Activated CD8-positive, alpha-beta T cell treated with anti-CD3 and anti-CD28 coated beads for 36 hours (primary cell): ENCODE measurements at regions of chr11 and their contacts with region 1.

Region 1: DNA sequence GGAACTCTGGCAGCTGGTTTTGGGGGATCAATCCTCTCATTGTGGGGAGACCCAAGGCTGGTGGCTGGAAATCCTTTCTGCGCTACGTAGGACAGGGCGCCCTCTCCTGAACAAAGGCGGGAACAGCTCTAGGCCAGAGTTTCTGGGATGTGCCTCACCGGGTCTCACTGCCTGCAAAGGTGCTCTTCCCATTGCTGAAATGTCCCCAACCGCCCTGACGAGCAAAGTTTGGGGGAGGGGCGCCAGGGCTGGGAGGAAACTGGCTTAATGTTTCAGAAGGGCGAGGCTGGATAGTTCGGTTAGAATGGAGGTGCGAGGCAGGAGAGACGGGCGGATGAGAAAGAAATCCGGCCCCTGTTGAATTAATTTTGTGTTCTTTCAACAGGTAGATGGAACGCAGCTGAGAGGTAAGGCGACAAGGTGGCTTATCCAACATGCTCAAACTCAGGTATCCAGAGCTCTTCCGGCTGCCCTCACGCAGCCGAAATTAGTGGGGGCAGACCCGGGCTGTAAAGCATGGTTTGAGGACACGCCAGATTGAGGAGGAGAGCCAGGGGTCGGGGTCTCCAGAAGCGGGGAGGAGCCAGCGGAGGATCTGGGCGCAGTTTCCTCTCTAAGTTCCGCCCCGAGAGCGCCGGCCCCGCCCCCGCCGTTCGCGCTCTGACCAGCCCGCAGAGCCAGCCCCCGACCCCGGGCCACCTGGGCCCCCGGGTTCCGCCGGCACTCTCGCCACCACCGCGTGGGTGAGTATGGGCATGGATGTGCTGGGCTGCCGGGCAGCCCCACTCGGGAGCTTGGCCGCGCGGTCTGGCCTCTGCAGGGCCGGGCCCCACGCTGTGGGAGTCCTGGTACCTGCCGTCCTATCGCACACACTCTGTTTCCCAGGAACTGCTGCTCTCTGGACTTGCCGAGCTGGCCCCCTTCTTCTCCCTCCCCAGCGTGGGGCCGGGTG is at the start of gene PGAP2:
- DNase-seq: peak; percentile 70
- ATAC-seq: peak; percentile 80
- H3K4me3 Mint-ChIP-seq: peak within 1 kb of the TSS; percentile 95
- H3K27ac Mint-ChIP-seq: peak within 1 kb of the TSS; percentile 91
- H3K4me1 Mint-ChIP-seq: peaks cover 22% of the 10 kb centered on the region
- H3K27me3 Mint-ChIP-seq: no peaks in the 10 kb centered on the region
- CTCF ChIP-seq: peak; percentile 58
- total RNA-seq, gene PGAP2: 33.1 to 36.7 TPM

Region 2: DNA sequence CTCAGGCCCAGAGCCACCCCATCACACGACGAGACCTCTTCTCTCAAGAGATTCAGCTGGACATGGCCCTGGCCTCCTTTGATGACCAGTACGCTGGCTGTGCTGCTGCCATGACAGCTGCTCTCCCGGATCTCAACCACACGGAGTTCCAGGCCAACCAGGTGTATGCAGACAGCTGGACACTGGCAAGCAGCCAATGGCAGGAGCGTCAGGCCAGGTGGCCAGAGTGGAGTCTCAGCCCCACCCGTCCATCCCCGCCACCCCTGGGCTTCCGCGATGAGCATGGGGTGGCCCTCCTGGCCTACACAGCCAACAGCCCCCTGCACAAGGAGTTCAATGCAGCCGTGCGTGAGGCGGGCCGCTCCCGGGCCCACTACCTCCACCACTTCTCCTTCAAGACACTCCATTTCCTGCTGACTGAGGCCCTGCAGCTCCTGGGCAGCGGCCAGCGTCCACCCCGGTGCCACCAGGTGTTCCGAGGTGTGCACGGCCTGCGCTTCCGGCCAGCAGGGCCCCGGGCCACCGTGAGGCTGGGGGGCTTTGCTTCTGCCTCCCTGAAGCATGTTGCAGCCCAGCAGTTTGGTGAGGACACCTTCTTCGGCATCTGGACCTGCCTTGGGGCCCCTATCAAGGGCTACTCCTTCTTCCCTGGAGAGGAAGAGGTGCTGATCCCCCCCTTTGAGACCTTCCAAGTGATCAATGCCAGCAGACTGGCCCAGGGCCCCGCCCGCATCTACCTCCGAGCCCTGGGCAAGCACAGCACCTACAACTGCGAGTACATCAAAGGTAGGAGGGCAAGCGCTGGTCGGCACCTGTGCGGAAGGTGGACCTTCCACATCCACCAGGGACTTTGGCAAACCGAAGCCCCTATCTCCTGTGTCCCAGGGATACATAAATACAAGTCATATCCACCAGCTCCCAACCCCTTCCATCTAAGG is 148.3 kb before region 1 on chr11:
- CTCF ChIA-PET with region 1: no interaction called
- POLR2A ChIA-PET with region 1: no interaction called
- intact Hi-C with region 1: no loop called
- DNase-seq: no peak
- ATAC-seq: no peak
- H3K4me3 Mint-ChIP-seq: no peak overlapping the region
- H3K27ac Mint-ChIP-seq: no peak overlapping the region
- H3K4me1 Mint-ChIP-seq: no peaks in the 10 kb centered on the region
- H3K27me3 Mint-ChIP-seq: peaks cover 7% of the 10 kb centered on the region
- CTCF ChIP-seq: no peak

Region 3: DNA sequence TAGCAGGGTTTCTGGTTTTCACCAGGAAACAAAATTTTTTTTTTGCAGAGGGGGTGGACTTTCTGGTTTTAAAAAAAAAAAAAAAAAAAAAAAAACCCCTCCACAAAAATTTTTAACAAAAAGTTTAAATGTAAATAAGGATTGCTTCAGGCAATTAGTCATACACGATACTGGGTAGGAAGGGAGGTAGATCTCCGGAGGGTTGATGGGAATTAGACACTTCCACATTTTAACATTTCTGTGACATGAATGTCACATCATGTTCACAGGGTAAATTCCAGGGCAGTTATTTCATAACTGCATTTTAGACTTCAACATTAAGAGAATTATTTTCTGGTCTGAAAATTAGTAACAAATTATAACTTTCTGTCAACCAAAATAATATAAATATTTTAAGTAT is 26.8 kb before region 1 on chr11:
- CTCF ChIA-PET with region 1: interaction called, 43 read pairs
- POLR2A ChIA-PET with region 1: interaction called, 3 read pairs
- intact Hi-C with region 1: no loop called
- DNase-seq: no peak
- ATAC-seq: no peak
- H3K4me3 Mint-ChIP-seq: no peak overlapping the region
- H3K27ac Mint-ChIP-seq: peak overlapping the region; percentile 61
- H3K4me1 Mint-ChIP-seq: peaks cover 46% of the 10 kb centered on the region
- H3K27me3 Mint-ChIP-seq: no peaks in the 10 kb centered on the region
- CTCF ChIP-seq: no peak

Region 4: GRCh38 chr11:3797329-3798095 is 10.7 kb before region 1 on chr11 and contains the start of gene NUP98:
- CTCF ChIA-PET with region 1: interaction called, 33 read pairs
- POLR2A ChIA-PET with region 1: interaction called, 25 read pairs
- intact Hi-C with region 1: no loop called
- DNase-seq: peak; percentile 100
- ATAC-seq: peak; percentile 98
- H3K4me3 Mint-ChIP-seq: peak within 1 kb of the TSS; percentile 90
- H3K27ac Mint-ChIP-seq: peak within 1 kb of the TSS; percentile 99
- H3K4me1 Mint-ChIP-seq: peaks cover 43% of the 10 kb centered on the region
- H3K27me3 Mint-ChIP-seq: no peaks in the 10 kb centered on the region
- CTCF ChIP-seq: no peak
- total RNA-seq, gene NUP98: 88.4 to 89.9 TPM

Region 5: GRCh38 chr11:3824714-3825472 is 16.7 kb after region 1 on chr11:
- CTCF ChIA-PET with region 1: interaction called, 32 read pairs
- POLR2A ChIA-PET with region 1: interaction called, 3 read pairs
- intact Hi-C with region 1: no loop called
- DNase-seq: peak; percentile 92
- ATAC-seq: peak; percentile 98
- H3K4me3 Mint-ChIP-seq: no peak overlapping the region
- H3K27ac Mint-ChIP-seq: peak overlapping the region; percentile 76
- H3K4me1 Mint-ChIP-seq: peaks cover 34% of the 10 kb centered on the region
- H3K27me3 Mint-ChIP-seq: no peaks in the 10 kb centered on the region
- CTCF ChIP-seq: peak; percentile 82

Region 6: DNA sequence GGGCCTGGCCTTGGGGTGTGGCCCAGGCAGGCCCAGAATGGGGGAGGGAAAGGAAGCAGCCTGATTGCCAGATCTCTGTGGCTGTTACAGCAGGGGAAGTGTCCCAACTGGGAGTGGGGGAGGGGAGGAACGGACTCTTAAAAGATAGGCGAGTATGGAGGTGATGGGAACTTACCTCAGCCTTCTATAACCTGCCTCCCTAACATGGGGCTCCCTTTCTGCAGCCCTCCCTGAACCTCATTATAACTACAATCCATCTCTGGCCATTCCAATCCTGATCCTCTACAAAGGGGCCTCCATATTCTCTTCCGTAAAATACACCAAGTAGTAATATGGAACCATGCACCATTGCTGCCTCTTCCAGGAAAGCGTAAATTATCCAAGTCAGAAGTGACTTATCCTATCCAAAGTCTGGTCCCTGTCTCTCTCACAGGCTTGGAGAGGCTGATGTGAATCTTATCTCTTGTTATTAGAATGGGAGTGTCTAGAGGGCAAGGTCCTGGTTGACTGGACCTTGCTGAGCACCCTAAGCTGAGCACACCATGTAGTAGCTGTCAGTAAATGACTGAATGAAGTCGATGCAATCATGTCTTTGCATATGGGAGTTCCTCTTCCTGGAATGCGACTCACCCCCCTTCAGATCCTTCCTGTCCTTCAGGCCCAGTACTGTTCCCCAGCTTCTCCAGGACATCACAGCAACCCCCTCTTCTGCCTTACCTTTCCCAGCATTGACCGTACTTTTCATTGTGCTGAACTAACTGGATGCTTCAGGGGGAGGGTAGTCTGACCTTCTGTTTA is 26.7 kb after region 1 on chr11:
- CTCF ChIA-PET with region 1: interaction called, 10 read pairs
- POLR2A ChIA-PET with region 1: interaction called, 16 read pairs
- intact Hi-C with region 1: no loop called
- DNase-seq: no peak
- ATAC-seq: no peak
- H3K4me3 Mint-ChIP-seq: peak overlapping the region; percentile 87
- H3K27ac Mint-ChIP-seq: peak overlapping the region; percentile 91
- H3K4me1 Mint-ChIP-seq: peaks cover 74% of the 10 kb centered on the region
- H3K27me3 Mint-ChIP-seq: no peaks in the 10 kb centered on the region
- CTCF ChIP-seq: no peak

Region 7: GRCh38 chr11:3841426-3842350 is 33.5 kb after region 1 on chr11:
- CTCF ChIA-PET with region 1: interaction called, 8 read pairs
- POLR2A ChIA-PET with region 1: interaction called, 16 read pairs
- intact Hi-C with region 1: no loop called
- DNase-seq: peak; percentile 40
- ATAC-seq: no peak
- H3K4me3 Mint-ChIP-seq: peak overlapping the region; percentile 87
- H3K27ac Mint-ChIP-seq: peak overlapping the region; percentile 94
- H3K4me1 Mint-ChIP-seq: peaks cover 51% of the 10 kb centered on the region
- H3K27me3 Mint-ChIP-seq: no peaks in the 10 kb centered on the region
- CTCF ChIP-seq: peak; percentile 69